Vagina (tissue), 2 donors: ENCODE measurements at regions of chr14 and their contacts with region 1.

Region 1: DNA sequence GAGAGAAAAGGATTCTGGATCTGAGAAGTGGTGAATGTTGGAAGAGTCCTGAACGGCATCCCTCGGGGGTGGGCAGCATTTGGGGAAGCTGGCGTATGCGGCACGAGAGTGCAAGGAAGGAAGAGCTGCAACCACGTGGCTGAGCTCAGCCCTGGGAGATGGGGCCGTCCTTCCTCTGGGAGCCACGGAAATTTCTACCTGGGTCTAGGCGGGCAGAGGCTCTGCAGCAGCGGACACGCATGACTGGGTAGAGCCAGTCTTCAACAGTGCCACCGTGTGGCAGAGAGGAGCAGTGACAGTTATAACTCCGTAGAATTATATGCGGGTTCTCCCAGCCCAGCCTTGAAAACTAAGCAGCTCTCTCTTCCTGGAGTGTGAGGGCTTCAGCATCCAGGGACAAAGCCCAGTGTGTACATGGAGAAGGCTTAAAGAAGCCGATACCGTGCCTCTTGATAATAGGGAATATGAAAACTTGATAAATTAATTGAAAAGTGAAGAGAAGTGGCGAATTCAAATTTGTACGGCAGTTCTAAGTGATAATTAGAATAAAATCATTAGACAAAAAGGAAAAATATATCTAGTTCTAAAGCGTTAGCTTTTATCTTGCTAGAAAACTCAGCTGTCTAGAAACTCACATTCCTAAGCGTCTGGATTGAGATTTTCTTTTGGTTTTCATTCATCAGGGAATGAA is 82.9 kb upstream of the STXBP6 start:
- DNase-seq: no peak
- H3K4me3 ChIP-seq: no peak overlapping the region
- H3K27ac ChIP-seq: no peak overlapping the region
- H3K4me1 ChIP-seq: no peaks in the 10 kb centered on the region
- H3K27me3 ChIP-seq: no peaks in the 10 kb centered on the region
- CTCF ChIP-seq: peak; percentile 54 to 70 (median 67)
- POLR2A ChIP-seq: no peak

Region 2: DNA sequence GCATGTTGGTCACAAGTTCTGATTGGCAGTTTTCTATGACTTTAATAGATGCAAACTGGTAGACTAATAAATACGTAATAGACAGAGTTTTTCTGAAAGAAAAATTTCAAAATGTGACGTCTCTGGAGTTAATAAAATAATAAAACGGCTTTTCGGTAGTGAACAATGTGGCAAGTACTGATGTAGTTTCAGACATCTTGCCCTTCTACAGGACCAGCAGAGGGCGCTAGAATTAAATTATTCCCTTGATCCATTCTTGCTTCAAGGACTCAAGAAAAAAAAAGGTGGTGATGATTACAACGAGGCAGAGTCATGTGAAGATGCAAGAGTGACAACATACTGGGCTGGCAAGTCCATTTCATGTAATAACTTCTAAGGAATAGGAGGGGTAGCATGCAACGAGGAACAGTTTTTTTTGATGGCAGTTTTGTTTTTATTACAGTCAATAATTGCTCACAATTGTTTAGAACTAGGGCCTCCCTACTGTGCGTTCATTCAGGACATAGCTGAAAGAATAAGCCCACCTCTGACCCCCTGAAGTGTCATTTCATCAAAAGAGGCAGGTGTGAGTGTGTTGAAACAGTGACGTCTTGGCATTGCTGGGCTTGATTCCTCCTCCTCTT is 397.9 kb before region 1 on chr14:
- intact Hi-C with region 1: loop called (anchors 10 kb)
- DNase-seq: no peak
- H3K4me3 ChIP-seq: no peak overlapping the region
- H3K27ac ChIP-seq: no peak overlapping the region
- H3K4me1 ChIP-seq: no peaks in the 10 kb centered on the region
- H3K27me3 ChIP-seq: no peaks in the 10 kb centered on the region
- CTCF ChIP-seq: peak; percentile 8 to 69 (median 29)
- POLR2A ChIP-seq: no peak

Region 3: DNA sequence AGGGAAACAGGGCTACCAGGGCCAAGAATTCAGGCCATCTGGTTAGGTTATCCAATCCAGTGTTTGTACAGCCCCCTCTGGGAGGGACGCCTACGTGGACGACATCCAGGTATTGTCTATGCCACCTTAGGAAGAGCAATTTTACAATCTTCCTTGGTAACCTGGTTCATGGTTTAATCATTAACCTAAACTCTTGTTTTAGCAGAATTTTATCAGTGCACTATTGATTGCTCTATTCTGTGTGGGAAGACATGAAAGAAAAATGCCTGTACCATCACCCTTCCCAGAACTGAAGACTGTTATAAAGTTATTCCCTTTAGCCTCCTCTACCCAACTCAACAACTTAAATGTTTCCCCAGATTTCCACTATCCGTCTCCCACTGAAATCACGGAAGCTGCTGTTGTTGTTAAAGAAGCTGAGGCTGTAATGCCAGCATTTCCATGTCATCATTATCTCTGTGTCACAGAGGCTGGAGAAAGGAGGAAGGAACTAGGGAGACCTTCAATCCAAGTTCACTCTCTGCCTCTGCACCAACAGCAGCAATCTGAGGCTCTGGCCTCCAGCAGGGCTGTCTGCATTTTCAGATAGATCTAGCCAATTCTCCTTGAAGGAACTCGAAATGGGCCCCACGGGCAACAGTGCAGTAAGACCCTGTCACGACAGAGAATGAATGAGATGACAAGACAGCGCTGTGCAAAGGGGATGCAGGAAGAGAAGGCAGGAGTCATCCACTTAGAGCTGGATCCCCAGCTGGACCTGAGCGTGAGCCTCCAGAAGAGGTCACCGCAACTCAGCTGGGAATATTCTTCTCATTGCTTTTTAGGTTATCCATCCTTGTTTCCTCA is 315.4 kb before region 1 on chr14:
- intact Hi-C with region 1: loop called (anchors 10 kb)
- DNase-seq: no peak
- H3K4me3 ChIP-seq: no peak overlapping the region
- H3K27ac ChIP-seq: no peak overlapping the region
- H3K4me1 ChIP-seq: no peaks in the 10 kb centered on the region
- H3K27me3 ChIP-seq: no peaks in the 10 kb centered on the region
- CTCF ChIP-seq: peak in 1 of 3 experiments; percentile 29
- POLR2A ChIP-seq: no peak

Region 4: GRCh38 chr14:25178255-25178654 is 45.4 kb after region 1 on chr14:
- intact Hi-C with region 1: no loop called
- DNase-seq: no peak
- H3K4me3 ChIP-seq: no peak overlapping the region
- H3K27ac ChIP-seq: no peak overlapping the region
- H3K4me1 ChIP-seq: no peaks in the 10 kb centered on the region
- H3K27me3 ChIP-seq: no peaks in the 10 kb centered on the region
- CTCF ChIP-seq: no peak
- POLR2A ChIP-seq: no peak